Sigmoid colon (tissue), 7 donors: ENCODE measurements at regions of chr1 and their contacts with region 1.

Region 1: GRCh38 chr1:1157426-1157913 is 16.2 kb upstream of the TTLL10 start:
- DNase-seq: peak; percentile 96
- H3K4me3 ChIP-seq: peak overlapping the region; percentile 53 to 76 (median 70)
- H3K27ac ChIP-seq: peak overlapping the region; percentile 91 to 99 (median 96)
- H3K4me1 ChIP-seq: peaks cover 0 to 18% (median 14%) of the 10 kb centered on the region in 4 donors
- H3K27me3 ChIP-seq: peaks cover 0 to 2% (median 0%) of the 10 kb centered on the region in 3 donors
- CTCF ChIP-seq: no peak
- EP300 ChIP-seq: no peak
- POLR2A ChIP-seq: peak; percentile 30 to 84

Region 2: DNA sequence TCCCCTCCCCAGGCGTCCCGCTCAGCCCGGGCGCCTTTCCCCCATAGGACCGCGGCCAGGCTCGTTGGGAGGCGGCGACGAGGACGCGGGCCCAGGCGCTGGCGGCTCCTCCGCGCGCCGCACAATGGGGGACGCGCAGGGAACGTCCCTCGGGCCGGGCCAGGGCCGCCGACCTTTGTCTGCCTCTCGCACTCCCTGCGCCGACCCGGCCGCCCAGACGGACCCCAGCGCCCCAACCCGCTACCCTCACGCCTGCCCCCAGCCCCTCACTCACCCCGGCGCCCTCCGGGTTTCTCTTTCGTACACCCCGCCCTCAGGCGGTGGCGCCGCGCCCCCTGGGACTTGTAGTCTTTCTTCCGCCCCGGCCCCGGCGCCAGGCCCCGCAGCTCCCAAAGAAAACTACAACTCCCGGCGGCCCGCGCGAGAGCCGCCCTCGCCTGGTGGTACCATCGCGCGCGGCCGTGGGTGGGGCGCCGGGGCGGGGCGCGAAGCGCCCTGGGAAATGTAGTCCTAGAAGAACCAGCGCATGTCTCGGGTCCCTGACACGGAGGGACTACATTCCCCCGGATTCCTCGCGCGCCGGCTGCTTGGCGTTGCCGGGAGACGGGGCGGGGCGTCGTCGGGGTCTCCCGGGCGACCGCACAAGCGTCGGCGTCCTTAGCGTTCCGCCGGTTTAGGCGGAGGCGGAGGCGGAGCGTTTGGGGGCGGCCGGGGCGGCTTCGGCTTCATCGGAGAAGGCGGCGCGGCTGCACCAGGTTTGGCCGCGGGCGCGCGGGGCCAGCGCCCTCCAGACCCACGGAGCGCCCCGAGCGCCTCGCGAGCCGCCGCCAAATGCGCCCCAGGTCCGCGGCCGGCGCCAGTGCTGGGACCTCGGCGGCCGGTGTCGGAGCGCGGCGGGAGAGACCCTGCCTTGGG is 41.4 kb before region 1 on chr1 and contains the start of gene C1orf159:
- intact Hi-C with region 1: loop called (anchors 1 kb)
- DNase-seq: peak; percentile 99
- H3K4me3 ChIP-seq: peak within 1 kb of the TSS; percentile 69 to 99 (median 93)
- H3K27ac ChIP-seq: peak within 1 kb of the TSS; percentile 74 to 87 (median 82)
- H3K4me1 ChIP-seq: peaks cover 0 to 19% (median 15%) of the 10 kb centered on the region in 4 donors
- H3K27me3 ChIP-seq: peaks cover 0 to 18% (median 0%) of the 10 kb centered on the region in 3 donors
- CTCF ChIP-seq: no peak
- EP300 ChIP-seq: no peak
- POLR2A ChIP-seq: no peak
- total RNA-seq, gene C1orf159: 7.9 to 13.8 (median 10.4) TPM

Region 3: DNA sequence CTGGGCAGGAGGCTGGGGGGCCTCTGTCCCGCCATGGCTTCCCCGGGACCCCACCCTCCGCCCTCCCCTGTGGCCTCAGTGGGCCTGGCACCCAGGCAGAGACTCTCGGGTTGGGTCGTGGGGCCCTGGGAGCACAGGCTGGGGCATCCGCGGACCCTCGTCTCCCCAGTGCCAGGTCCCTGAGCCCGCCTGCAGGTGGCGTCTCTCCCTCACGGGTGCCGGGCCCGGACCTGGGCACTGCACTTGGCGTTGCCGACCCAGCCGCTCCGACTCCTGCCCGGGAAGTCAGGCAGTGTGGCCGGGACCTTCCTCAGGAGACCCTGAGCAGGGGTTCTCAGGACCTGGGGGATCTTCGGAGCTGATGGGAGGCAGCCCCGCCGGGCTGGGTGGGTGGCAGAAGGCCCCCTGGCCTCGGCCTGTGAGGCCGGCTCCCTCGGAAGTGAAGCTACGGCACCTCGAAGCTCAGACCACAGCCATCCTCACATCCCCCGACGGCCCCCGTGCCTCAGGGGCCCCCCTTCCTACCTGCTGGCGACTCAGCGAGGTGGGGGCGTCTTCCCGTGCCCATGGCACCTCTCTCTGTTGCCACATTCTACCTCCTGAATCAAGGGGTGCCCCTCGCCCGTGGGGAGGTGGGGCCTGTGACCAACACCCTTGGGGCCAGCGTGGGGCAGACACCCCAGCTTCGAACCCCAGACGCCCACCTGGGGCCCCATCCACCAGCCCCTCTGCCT is 35.2 kb before region 1 on chr1:
- intact Hi-C with region 1: loop called (anchors 2 kb)
- DNase-seq: peak; percentile 90
- H3K4me3 ChIP-seq: peak overlapping the region in 3 of 4 donors; percentile 25 to 35 (median 33)
- H3K27ac ChIP-seq: peak overlapping the region in 1 of 4 donors; percentile 38
- H3K4me1 ChIP-seq: peaks cover 0 to 11% (median 11%) of the 10 kb centered on the region in 4 donors
- H3K27me3 ChIP-seq: peaks cover 0 to 40% (median 0%) of the 10 kb centered on the region in 3 donors
- CTCF ChIP-seq: peak; percentile 79 to 94 (median 90)
- EP300 ChIP-seq: no peak
- POLR2A ChIP-seq: no peak

Region 4: GRCh38 chr1:1206376-1207260 is 49.1 kb after region 1 on chr1 and contains the start of gene TNFRSF18:
- intact Hi-C with region 1: loop called (anchors 5 kb)
- DNase-seq: no peak
- H3K4me3 ChIP-seq: peak within 1 kb of the TSS in 3 of 4 donors; percentile 3 to 27 (median 24)
- H3K27ac ChIP-seq: no peak within 1 kb of the TSS
- H3K4me1 ChIP-seq: peaks cover 0 to 29% (median 27%) of the 10 kb centered on the region in 4 donors
- H3K27me3 ChIP-seq: peaks cover 4 to 49% (median 28%) of the 10 kb centered on the region in 3 donors
- CTCF ChIP-seq: no peak
- EP300 ChIP-seq: no peak
- POLR2A ChIP-seq: no peak
- total RNA-seq, gene TNFRSF18: 0.71 TPM in 1 of 4 donors, not detected in the others

Region 5: GRCh38 chr1:1231400-1232223 is 74.1 kb after region 1 on chr1 and contains the start of gene SDF4:
- intact Hi-C with region 1: loop called (anchors 2 kb)
- DNase-seq: peak; percentile 98
- H3K4me3 ChIP-seq: peak within 1 kb of the TSS; percentile 69 to 100 (median 96)
- H3K27ac ChIP-seq: peak within 1 kb of the TSS; percentile 92 to 97 (median 96)
- H3K4me1 ChIP-seq: peaks cover 0 to 50% (median 33%) of the 10 kb centered on the region in 4 donors
- H3K27me3 ChIP-seq: no peaks in the 10 kb centered on the region
- CTCF ChIP-seq: no peak
- EP300 ChIP-seq: no peak
- POLR2A ChIP-seq: peak; percentile 18 to 47
- total RNA-seq, gene SDF4: 73.4 to 95.6 (median 81.9) TPM